Right ventricle myocardium superior (tissue), 1 donor: ENCODE measurements at regions of chr1 and their contacts with region 1.

Region 1: DNA sequence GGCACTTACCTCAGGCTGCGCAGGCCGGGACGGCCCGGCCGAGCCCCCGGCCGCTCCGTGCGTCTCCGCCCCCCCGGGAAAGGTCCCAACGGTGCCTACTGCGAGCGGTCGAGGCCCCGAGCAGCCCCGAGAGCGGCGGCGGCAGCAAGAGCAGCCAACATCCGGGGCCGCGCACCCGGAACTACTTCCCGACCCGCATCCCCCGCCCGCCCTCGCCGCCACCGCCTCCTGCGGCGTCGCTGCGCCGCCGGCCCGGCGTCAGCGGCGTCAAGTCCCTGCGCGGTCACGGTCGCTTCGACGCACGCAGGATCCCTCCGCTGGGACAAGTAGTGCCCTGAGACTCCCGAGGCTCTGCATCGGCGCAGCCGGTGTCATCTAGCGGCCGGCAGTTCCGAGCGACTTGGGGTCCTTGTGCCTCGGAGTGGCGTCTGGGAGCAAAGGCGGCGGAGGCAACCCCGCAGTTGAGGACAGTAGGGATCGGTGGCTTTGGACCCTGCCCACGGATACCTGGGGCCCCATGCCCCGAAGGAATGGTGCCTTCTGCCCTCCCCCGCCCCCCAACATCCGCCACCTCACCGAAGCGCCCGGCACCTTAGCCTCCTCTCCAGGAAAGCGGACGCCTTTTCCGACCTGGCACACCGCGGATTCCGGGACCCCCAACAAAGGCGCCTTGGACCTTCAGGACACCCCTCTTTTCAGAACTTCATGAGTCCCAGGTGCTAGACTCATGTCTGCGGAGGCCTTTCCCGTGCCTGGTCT is at the start of gene FOXJ3:
- DNase-seq: peak; percentile 94
- ATAC-seq: peak; percentile 97
- total RNA-seq, gene FOXJ3: 33.1 TPM

Region 2: GRCh38 chr1:42173155-42173933 is 161.9 kb before region 1 on chr1:
- intact Hi-C with region 1: loop called (anchors 10 kb)
- DNase-seq: peak; percentile 81
- ATAC-seq: peak; percentile 60

Region 3: GRCh38 chr1:42618866-42619265 is 283.6 kb after region 1 on chr1:
- intact Hi-C with region 1: no loop called
- DNase-seq: no peak
- ATAC-seq: no peak